ENCODE measurements at regions of chr14 and their contacts with region 1.

Region 1: DNA sequence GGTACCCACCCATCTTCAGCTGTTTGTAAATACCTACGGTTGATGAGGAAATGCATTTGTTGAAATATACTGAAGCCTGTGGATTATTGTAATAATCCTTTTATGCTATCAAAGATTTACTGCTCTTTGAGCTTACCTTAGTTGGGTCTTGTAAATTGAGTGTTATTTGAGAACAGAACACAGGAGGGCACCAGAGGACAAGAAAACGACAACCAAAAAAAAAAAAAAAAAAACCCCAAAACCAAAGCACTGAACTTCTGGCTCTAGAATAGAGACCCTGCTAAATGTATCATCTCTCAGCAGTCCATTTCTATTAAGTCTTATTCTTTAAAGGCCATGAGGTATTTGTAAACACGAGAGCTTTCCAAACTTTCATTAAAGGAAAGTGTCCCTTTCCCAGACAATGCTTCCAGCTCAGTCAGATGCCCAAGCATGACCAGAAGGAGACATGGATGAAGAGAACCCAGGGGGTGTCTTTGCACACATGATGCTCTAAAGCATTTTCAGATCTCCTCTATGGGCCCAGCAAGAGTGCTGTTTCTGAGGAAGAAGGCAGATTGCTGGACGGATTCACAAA is 763.9 kb downstream of the NRXN3 start:
- DNase-seq: peak; percentile 36
- H3K4me3 Mint-ChIP-seq: no peak overlapping the region
- H3K27ac Mint-ChIP-seq: no peak overlapping the region
- H3K4me1 Mint-ChIP-seq: no peaks in the 10 kb centered on the region
- H3K27me3 Mint-ChIP-seq: peaks cover 20% of the 10 kb centered on the region
- CTCF ChIP-seq: peak; percentile 50

Region 2: GRCh38 chr14:78202163-78202562 is 731.9 kb before region 1 on chr14:
- CTCF ChIA-PET with region 1: no interaction called
- POLR2A ChIA-PET with region 1: no interaction called
- intact Hi-C with region 1: no loop called
- DNase-seq: no peak
- H3K4me3 Mint-ChIP-seq: no peak overlapping the region
- H3K27ac Mint-ChIP-seq: no peak overlapping the region
- H3K4me1 Mint-ChIP-seq: no peaks in the 10 kb centered on the region
- H3K27me3 Mint-ChIP-seq: peaks cover 7% of the 10 kb centered on the region
- CTCF ChIP-seq: no peak

Region 3: DNA sequence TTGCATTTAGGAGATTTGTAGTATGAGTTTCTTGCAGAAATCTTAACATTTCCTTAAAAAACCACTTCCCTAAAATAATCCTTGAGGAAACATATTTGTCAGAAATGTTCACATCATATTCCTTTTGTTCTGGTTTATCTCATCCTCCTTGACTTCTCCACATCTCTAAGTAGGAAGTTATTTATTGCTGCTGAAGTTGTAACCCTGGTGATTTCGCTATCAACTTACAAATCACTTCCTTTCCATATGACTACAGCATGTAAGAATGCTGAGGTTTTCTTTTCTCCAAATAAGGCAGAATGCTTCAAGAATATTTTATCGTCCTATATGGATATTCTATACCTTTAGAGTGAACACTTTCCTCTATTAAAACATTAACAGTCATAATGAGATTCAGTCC is 12.2 kb before region 1 on chr14:
- CTCF ChIA-PET with region 1: interaction called, 12 read pairs
- POLR2A ChIA-PET with region 1: interaction called, 3 read pairs
- intact Hi-C with region 1: no loop called
- DNase-seq: no peak
- H3K4me3 Mint-ChIP-seq: no peak overlapping the region
- H3K27ac Mint-ChIP-seq: no peak overlapping the region
- H3K4me1 Mint-ChIP-seq: no peaks in the 10 kb centered on the region
- H3K27me3 Mint-ChIP-seq: peaks cover 16% of the 10 kb centered on the region
- CTCF ChIP-seq: no peak

Region 4: DNA sequence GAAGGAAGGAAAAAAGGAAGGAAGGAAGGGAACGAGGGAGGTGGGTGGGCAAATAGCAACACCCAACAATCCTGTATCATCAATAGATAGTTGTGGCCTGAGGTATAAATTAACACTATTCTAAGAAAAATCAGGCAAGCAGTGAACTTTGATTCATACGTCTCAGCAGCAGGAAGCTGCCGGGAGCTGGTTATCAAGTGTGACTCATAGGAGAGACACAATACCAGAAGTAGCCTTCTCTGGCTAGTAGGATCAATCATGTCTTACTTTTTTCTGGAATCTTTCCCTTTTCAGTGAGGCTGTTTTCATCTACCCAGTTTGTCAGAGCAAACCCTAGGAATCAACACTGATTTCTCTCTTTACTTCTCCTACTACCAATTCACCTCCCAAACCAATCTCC is 16.6 kb after region 1 on chr14:
- CTCF ChIA-PET with region 1: interaction called, 24 read pairs
- POLR2A ChIA-PET with region 1: no interaction called
- intact Hi-C with region 1: no loop called
- DNase-seq: peak; percentile 22
- H3K4me3 Mint-ChIP-seq: no peak overlapping the region
- H3K27ac Mint-ChIP-seq: no peak overlapping the region
- H3K4me1 Mint-ChIP-seq: no peaks in the 10 kb centered on the region
- H3K27me3 Mint-ChIP-seq: peaks cover 30% of the 10 kb centered on the region
- CTCF ChIP-seq: no peak

Region 5: DNA sequence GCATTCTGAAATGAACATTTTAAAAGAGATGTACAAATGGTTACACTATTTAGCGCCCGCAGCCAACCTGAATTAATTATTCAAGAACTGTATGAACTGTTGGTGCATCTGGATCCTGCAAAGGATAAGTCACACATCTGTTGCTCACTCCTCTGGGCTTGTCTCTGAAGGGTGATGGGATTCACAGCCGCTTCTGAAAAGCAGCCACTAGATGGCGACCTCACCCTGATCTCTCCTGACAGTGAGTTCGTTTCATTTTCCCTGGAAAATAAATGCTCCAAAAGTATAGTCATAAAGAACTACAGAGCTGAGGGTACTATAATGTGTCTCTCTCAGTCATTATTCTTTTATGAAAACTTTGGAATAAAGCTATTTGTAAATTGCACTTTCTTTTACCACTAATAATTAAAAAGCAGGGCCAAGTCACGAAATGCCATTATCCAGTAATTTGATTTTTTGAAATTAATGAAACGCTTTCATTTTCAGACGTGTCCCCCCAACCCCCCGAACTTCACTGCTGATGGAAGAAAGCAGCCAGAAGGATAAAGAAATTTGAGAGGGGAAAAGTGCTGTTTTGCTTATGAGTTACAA is 25.7 kb after region 1 on chr14:
- CTCF ChIA-PET with region 1: interaction called, 35 read pairs
- POLR2A ChIA-PET with region 1: no interaction called
- intact Hi-C with region 1: no loop called
- DNase-seq: peak; percentile 70
- H3K4me3 Mint-ChIP-seq: no peak overlapping the region
- H3K27ac Mint-ChIP-seq: no peak overlapping the region
- H3K4me1 Mint-ChIP-seq: no peaks in the 10 kb centered on the region
- H3K27me3 Mint-ChIP-seq: peaks cover 53% of the 10 kb centered on the region
- CTCF ChIP-seq: peak; percentile 76